ENCODE measurements at regions of chr7 and their contacts with region 1.

Region 1: DNA sequence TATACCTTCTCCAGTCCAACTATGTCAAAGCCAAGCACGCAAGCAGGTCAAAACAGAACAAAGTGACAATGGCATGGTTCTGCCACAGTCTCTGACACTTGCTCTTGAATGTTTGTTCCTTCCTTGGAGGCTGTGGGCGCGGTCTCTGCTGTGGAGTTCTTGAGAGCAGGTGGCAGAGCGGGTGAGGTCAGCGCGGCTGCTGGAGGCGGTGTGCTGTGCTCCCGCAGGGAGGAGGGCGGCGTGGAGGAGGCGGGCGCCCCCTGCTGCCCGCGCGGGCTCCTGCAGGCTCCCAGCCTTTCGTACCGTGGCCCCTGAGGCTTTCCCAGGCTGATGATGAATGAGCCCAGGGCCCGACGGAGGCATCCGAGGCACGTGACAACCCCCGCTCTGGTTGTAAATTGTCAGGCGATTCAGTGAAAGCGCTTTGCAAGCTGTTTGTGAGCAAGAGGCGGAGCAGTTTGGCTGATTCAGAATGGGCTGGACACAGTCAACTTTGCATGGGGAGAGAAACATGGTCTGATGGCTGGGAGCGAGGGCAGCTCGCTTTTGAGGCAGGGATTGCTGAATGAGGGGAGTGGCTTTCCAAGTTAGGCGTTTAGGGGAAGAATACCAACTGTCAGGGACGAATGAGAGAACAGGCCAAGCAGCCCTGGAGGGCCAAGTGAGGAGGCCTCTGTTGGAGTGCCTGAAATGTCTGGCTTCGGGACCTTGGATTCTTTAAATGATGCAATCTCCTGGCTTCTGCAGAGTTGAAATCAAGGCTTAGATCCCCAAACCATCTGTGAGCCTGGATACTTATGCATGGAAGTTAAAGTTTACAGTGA is 46.6 kb downstream of the CDHR3 start:
- DNase-seq: peak; percentile 92
- ATAC-seq: peak; percentile 99
- H3K4me3 Mint-ChIP-seq: no peak overlapping the region
- H3K27ac Mint-ChIP-seq: peak overlapping the region; percentile 4
- H3K4me1 Mint-ChIP-seq: peaks cover 21% of the 10 kb centered on the region
- H3K27me3 Mint-ChIP-seq: peaks cover 2% of the 10 kb centered on the region

Region 2: GRCh38 chr7:105759670-105760550 is 249.7 kb before region 1 on chr7:
- CTCF ChIA-PET with region 1: interaction called, 6 read pairs
- POLR2A ChIA-PET with region 1: no interaction called
- intact Hi-C with region 1: loop called (anchors 1 kb)
- DNase-seq: peak; percentile 47
- ATAC-seq: peak; percentile 20
- H3K4me3 Mint-ChIP-seq: no peak overlapping the region
- H3K27ac Mint-ChIP-seq: no peak overlapping the region
- H3K4me1 Mint-ChIP-seq: peaks cover 28% of the 10 kb centered on the region
- H3K27me3 Mint-ChIP-seq: no peaks in the 10 kb centered on the region

Region 3: DNA sequence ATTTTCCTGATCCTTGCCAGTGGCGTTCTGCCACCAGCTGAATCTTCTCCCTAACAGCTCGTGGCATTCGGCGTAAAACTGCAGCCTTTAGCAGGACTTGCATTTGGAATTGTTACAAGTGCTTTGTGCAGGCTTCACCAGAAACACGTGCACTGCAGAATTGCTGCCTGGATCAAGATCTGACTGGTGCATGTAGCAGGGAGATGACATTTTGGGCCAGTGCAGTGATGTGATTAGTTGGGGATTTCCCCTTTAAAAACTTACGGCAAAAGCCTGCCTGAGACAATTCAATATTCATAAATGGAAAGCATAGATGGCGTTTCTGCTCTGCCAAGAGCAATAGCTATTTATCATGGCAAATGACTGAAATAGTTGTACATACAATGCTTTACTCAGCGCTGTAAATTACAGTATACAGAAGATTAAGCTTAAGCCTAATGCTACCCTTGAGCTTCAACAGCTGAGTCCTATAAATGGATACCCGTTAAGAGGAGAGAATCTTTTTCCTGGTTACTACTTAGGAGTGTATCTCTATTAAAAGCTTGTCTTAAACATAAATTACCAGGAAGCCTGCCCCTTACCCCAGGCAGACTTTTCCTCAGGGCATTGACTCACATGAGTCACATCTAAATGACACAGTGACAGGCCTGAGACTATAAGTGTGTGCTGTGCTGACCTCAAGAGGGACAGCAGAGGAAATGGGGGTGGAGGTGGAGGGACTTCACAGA is 239.6 kb before region 1 on chr7:
- CTCF ChIA-PET with region 1: interaction called, 4 read pairs
- POLR2A ChIA-PET with region 1: no interaction called
- intact Hi-C with region 1: loop called in 1 of 2 experiments (anchors 1 kb)
- DNase-seq: peak; percentile 53
- ATAC-seq: peak; percentile 70
- H3K4me3 Mint-ChIP-seq: no peak overlapping the region
- H3K27ac Mint-ChIP-seq: no peak overlapping the region
- H3K4me1 Mint-ChIP-seq: peaks cover 40% of the 10 kb centered on the region
- H3K27me3 Mint-ChIP-seq: no peaks in the 10 kb centered on the region

Region 4: DNA sequence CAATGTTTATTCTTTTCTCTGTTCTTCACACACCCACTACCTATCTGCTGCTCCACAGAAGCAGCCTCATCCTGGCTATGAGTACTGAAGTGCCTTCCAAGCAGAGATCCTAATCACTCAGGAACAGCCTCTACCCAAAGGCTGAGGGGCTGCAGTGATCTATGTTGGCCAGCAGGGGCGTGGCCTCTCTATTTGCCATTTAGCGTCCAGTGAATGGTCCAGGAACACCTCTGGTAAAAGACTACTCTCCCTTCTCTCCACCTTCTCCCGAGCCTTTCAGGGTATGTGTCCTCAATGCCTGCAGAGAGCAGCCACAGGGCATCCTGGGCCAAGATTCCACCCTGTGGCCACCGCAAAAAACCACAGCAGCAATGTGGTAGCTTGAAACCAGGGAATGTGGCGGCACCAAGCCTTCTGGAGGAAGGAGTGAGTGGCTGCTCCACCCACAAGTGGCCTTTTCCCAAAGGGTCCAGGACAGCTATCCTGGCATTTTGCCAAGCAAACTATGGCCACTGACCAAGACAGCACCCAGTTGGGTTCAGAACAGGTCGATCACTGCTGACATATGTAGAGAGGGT is 31.6 kb after region 1 on chr7:
- CTCF ChIA-PET with region 1: interaction called, 4 read pairs
- POLR2A ChIA-PET with region 1: no interaction called
- intact Hi-C with region 1: loop called in 1 of 2 experiments (anchors 1 kb)
- DNase-seq: peak; percentile 59
- ATAC-seq: peak; percentile 42
- H3K4me3 Mint-ChIP-seq: no peak overlapping the region
- H3K27ac Mint-ChIP-seq: no peak overlapping the region
- H3K4me1 Mint-ChIP-seq: peaks cover 31% of the 10 kb centered on the region
- H3K27me3 Mint-ChIP-seq: no peaks in the 10 kb centered on the region